ENCODE measurements at regions of chr6 and their contacts with region 1.

Region 1: DNA sequence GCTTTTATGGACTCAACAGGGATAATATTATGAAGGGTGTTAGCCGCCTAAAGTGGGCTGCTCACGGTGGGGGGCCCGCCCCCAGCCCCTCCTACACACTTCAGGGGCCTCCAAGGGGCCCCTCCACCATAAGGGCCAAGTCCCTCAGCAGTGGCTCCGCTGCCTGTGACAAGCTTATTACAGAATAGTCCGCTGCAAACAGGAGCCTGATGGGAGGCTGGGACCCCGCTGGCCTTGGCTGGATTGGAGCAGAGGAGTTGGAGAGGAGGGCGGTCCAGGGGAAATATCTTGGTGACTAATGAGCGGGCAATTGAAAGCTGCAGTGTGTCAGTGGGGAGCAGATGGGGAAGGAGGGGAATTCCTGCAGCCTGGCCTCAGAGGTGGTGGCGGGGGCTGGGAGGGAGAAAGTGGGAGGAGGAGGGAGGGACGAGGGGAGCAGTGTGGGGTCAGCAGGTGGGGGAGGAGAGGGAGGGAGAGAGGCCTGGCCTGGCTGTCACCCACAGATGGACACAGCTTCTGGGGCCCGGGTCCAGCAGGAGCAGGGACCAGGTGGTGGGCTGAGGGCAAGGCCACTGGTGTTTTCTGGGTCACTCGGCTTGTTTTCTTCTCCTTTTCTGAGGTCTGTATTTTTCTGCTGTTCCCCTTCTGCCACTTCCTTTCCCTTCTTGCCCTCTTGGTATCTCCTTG is 57.6 kb upstream of the FOXP4 start:
- DNase-seq: peak; percentile 42
- ATAC-seq: peak; percentile 87
- H3K4me3 ChIP-seq: peak overlapping the region; percentile 42; the same call in 1 of the 2 replicates
- H3K27ac ChIP-seq: peak overlapping the region; percentile 68
- H3K4me1 ChIP-seq: peaks cover 47% of the 10 kb centered on the region
- H3K27me3 ChIP-seq: no peaks in the 10 kb centered on the region
- CTCF ChIP-seq: no peak
- EP300 ChIP-seq: no peak
- POLR2A ChIP-seq: no peak
- RAD21 ChIP-seq: 0 out of 2 replicates have a peak, but pooled peaks have one; percentile 1

Region 2: GRCh38 chr6:41474213-41474933 is 14.2 kb before region 1 on chr6:
- CTCF ChIA-PET with region 1: interaction called, 3 read pairs
- POLR2A ChIA-PET with region 1: interaction called, 12 read pairs
- RAD21 ChIA-PET with region 1: interaction called, 6 read pairs
- SMC1A ChIA-PET with region 1: interaction called, 4 read pairs
- in situ Hi-C with region 1: no loop called
- intact Hi-C with region 1: no loop called
- DNase-seq: no peak
- ATAC-seq: peak; percentile 70
- H3K4me3 ChIP-seq: no peak overlapping the region
- H3K27ac ChIP-seq: no peak overlapping the region
- H3K4me1 ChIP-seq: no peaks in the 10 kb centered on the region
- H3K27me3 ChIP-seq: peaks cover 0 to 3% of the 10 kb centered on the region in 2 experiments; a peak in 2 of 4 replicates
- CTCF ChIP-seq: no peak
- EP300 ChIP-seq: no peak
- POLR2A ChIP-seq: no peak
- RAD21 ChIP-seq: no peak

Region 3: GRCh38 chr6:41545703-41546474 is 57.3 kb after region 1 on chr6 and contains the start of gene FOXP4:
- CTCF ChIA-PET with region 1: no interaction called
- POLR2A ChIA-PET with region 1: interaction called, 4 read pairs
- RAD21 ChIA-PET with region 1: no interaction called
- SMC1A ChIA-PET with region 1: interaction called, 6 read pairs
- in situ Hi-C with region 1: no loop called
- intact Hi-C with region 1: loop called (anchors 5 kb)
- DNase-seq: peak; percentile 73
- ATAC-seq: peak; percentile 85
- H3K4me3 ChIP-seq: peak within 1 kb of the TSS; percentile 91
- H3K27ac ChIP-seq: peak within 1 kb of the TSS; percentile 74
- H3K4me1 ChIP-seq: peaks cover 16% of the 10 kb centered on the region
- H3K27me3 ChIP-seq: no peaks in the 10 kb centered on the region
- CTCF ChIP-seq: no peak
- EP300 ChIP-seq: no peak
- POLR2A ChIP-seq: peak; percentile 65
- RAD21 ChIP-seq: 0 out of 2 replicates have a peak, but pooled peaks have one; percentile 0
- polyA plus RNA-seq, gene FOXP4: 0.31 to 0.40 TPM